ENCODE measurements at regions of chr1 and their contacts with region 1.

Region 1: GRCh38 chr1:29793101-29793546 is 556.8 kb downstream of the PTPRU start:
- DNase-seq: peak; percentile 80
- H3K4me3 Mint-ChIP-seq: no peak overlapping the region
- H3K27ac Mint-ChIP-seq: no peak overlapping the region
- H3K4me1 Mint-ChIP-seq: no peaks in the 10 kb centered on the region
- H3K27me3 Mint-ChIP-seq: peaks cover 7% of the 10 kb centered on the region

Region 2: DNA sequence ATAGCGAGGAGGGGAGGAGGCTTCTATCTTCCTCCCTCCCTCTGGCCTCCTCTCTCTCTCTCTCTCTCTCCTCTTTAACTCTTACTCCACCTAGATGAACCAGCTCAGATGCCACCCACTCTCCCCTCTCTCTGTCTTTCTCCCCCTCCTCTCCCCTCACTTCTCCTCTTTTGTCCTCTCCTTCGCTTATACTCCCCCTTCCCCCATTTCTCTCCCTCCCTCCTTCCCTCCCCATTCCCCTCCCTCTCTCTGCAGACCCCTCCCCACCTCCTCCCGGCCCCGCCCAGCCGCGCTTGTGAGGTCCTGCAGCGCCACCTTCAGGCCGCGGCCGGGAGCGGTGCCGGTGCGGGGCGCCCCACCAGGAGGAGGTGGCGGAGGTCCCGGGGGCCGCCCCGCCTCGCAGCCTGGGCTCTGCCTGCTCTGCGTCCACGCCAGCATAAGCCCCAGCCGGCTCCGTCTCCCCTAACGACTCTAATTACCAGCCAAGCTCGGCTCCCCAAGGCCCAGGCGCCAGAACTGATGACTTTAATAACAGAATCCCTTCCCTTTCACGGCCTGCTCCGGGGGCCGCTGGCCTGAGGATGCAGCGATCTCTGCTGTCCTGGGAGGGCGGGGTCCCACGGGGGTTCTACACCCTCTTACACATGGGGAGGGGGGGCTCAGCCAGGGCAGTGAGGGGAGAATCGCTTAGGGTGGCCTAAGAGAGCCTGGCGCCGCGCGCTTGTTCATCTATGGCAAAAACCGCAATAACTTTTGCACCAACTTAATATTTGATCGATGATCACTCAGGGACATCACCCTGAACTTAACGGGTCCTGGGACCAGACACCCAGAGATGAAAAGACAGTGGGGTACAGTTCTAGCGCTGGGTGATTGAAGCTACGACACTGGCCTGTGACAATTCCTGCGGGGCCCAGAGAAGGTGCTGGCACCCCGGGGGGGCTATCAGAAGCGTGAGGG is 293.0 kb after region 1 on chr1:
- CTCF ChIA-PET with region 1: interaction called, 3 read pairs
- POLR2A ChIA-PET with region 1: no interaction called
- intact Hi-C with region 1: loop called (anchors 10 kb)
- DNase-seq: peak; percentile 41
- H3K4me3 Mint-ChIP-seq: no peak overlapping the region
- H3K27ac Mint-ChIP-seq: no peak overlapping the region
- H3K4me1 Mint-ChIP-seq: peaks cover 2% of the 10 kb centered on the region
- H3K27me3 Mint-ChIP-seq: peaks cover 37% of the 10 kb centered on the region

Measured in activated CD4-positive, alpha-beta memory T cell treated with anti-CD3 and anti-CD28 coated beads for 36 hours (primary cell).